Activated CD4-positive, alpha-beta T cell treated with anti-CD3 and anti-CD28 coated beads, Interleukin-2, amount 10 ng/mL, durations not matched to agents 24 days and 14 days (primary cell): ENCODE measurements at regions of chr1 and their contacts with region 1.

Region 1: GRCh38 chr1:91754348-91754747 is 131.6 kb downstream of the TGFBR3 start:
- DNase-seq: peak; percentile 71
- H3K4me3 Mint-ChIP-seq: peak overlapping the region; percentile 15
- H3K27ac Mint-ChIP-seq: peak overlapping the region; percentile 85
- H3K4me1 Mint-ChIP-seq: peaks cover 34% of the 10 kb centered on the region
- H3K27me3 Mint-ChIP-seq: peaks cover 4% of the 10 kb centered on the region

Region 2: GRCh38 chr1:91523482-91523881 is 230.9 kb before region 1 on chr1:
- intact Hi-C with region 1: loop called (anchors 1 kb)
- DNase-seq: peak; percentile 71
- H3K4me3 Mint-ChIP-seq: no peak overlapping the region
- H3K27ac Mint-ChIP-seq: peak overlapping the region; percentile 22
- H3K4me1 Mint-ChIP-seq: peaks cover 28% of the 10 kb centered on the region
- H3K27me3 Mint-ChIP-seq: no peaks in the 10 kb centered on the region

Region 3: DNA sequence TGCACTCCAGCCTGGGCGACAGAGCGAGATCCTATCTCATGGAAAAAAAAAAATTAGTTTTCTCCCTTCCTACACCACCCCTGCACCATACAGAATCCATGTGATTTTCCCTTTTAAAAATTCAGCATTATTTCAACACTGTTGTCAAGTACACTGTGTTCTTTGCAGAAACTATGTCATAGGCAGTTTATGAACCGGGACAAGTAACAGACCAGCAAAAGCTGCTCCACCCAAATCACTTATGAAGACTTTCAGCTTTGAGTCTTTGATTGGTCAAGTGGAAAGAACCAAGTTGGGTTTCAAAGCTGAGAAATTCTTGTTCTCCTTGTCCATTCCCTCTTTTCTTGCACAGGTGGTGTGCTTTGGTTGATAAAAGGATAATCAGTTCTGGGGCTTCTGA is 80.7 kb before region 1 on chr1:
- intact Hi-C with region 1: loop called (anchors 1 kb)
- DNase-seq: no peak
- H3K4me3 Mint-ChIP-seq: no peak overlapping the region
- H3K27ac Mint-ChIP-seq: peak overlapping the region; percentile 88
- H3K4me1 Mint-ChIP-seq: peaks cover 33% of the 10 kb centered on the region
- H3K27me3 Mint-ChIP-seq: no peaks in the 10 kb centered on the region

Region 4: GRCh38 chr1:91712981-91713841 is 41.1 kb before region 1 on chr1:
- intact Hi-C with region 1: loop called (anchors 1 kb)
- DNase-seq: peak; percentile 85
- H3K4me3 Mint-ChIP-seq: peak overlapping the region; percentile 55
- H3K27ac Mint-ChIP-seq: peak overlapping the region; percentile 88
- H3K4me1 Mint-ChIP-seq: peaks cover 35% of the 10 kb centered on the region
- H3K27me3 Mint-ChIP-seq: no peaks in the 10 kb centered on the region

Region 5: GRCh38 chr1:91803847-91804545 is 49.6 kb after region 1 on chr1:
- intact Hi-C with region 1: loop called (anchors 1 kb)
- DNase-seq: peak; percentile 91
- H3K4me3 Mint-ChIP-seq: peak overlapping the region; percentile 78
- H3K27ac Mint-ChIP-seq: peak overlapping the region; percentile 95
- H3K4me1 Mint-ChIP-seq: peaks cover 45% of the 10 kb centered on the region
- H3K27me3 Mint-ChIP-seq: peaks cover 12% of the 10 kb centered on the region

Region 6: DNA sequence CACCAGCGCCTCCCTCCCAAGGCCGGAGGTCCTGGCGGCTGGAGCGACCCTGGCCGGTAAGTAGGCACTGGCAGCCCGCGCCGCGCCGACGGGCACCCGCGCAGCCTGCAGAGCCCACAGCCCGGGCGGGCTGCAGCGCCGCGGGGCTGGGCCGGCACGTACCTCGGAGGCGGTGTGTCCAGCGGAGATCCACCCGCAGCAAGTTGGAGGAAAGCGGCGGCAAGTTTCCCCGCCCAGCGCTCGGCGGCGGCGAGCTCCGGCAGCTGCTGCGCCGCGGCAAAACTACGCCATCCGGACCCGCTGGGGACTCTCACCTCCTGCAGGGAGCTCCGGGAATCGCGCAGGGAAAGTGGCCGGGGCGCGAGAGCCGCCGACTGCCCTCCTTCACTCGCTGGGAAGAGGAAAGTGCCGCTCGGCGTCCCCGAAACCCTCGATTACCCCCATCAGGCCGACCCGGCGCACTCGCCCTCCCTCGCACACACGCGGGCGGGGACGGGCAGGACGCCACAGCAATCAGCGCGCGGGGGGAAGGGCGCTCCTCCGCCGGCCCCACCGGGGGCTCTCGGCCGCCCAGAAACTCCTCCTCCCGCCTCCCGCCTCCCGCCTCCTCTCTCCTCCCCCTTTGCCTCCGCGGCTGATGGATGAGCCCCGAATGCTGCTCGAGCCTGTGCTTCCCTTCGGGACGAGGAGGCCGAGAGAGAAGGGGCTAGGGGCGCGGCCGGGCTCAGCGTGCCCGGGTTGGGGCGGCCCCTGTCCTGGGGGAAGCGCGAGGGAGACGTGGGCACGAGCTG is 131.6 kb after region 1 on chr1 and contains the start of gene TGFBR3:
- intact Hi-C with region 1: loop called (anchors 1 kb)
- DNase-seq: peak; percentile 91
- H3K4me3 Mint-ChIP-seq: peak within 1 kb of the TSS; percentile 92
- H3K27ac Mint-ChIP-seq: peak within 1 kb of the TSS; percentile 59
- H3K4me1 Mint-ChIP-seq: peaks cover 32% of the 10 kb centered on the region
- H3K27me3 Mint-ChIP-seq: peaks cover 27% of the 10 kb centered on the region
- total RNA-seq, gene TGFBR3: 5.3 and 7.4 TPM in 2 replicates